Calu3 (cell line): ENCODE measurements at regions of chr10 and their contacts with region 1.

Region 1: GRCh38 chr10:11515596-11516430 is 95.6 kb downstream of the USP6NL start:
- DNase-seq: peak; percentile 41
- H3K4me3 Mint-ChIP-seq: no peak overlapping the region
- H3K27ac Mint-ChIP-seq: no peak overlapping the region
- H3K4me1 Mint-ChIP-seq: peaks cover 9% of the 10 kb centered on the region
- H3K27me3 Mint-ChIP-seq: no peaks in the 10 kb centered on the region
- CTCF ChIP-seq: peak; percentile 65

Region 2: GRCh38 chr10:11209830-11210181 is 306.0 kb before region 1 on chr10:
- CTCF ChIA-PET with region 1: no interaction called
- intact Hi-C with region 1: no loop called
- DNase-seq: no peak
- H3K4me3 Mint-ChIP-seq: no peak overlapping the region
- H3K27ac Mint-ChIP-seq: no peak overlapping the region
- H3K4me1 Mint-ChIP-seq: no peaks in the 10 kb centered on the region
- H3K27me3 Mint-ChIP-seq: peaks cover 17% of the 10 kb centered on the region
- CTCF ChIP-seq: no peak

Region 3: DNA sequence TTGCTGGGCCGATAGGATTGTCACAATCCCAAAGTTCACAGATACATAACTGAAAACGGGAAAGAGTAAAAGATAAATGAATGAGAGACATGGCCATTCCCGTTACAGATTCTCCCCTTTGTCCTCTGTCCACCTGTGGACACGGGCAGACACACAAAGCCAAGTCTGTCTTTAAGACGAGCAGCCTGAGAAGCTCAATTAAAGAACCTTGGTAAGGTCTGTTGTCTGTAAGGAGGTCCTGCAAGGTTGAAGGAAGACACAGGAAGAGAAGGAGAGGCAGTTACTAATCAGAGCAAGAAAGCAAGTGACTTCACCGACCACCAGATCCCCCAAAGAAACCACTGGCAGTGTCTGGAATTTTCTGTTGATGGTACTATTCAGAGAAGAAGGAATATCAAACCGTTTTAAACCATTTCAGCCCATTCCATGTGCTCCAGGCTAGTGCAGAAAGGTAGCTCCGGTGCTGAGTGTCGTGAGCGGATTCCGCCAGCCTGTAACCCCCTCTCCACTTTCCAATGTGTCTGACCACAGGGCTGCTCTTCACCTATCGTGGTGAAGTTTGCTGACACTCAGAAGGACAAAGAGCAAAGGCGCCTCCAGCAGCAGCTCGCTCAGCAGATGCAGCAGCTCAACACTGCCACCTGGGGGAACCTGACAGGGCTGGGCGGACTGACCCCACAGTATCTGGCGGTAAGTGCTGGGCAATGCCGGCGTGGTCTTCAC is 245.5 kb before region 1 on chr10:
- CTCF ChIA-PET with region 1: no interaction called
- intact Hi-C with region 1: no loop called
- DNase-seq: peak; percentile 84
- H3K4me3 Mint-ChIP-seq: no peak overlapping the region
- H3K27ac Mint-ChIP-seq: no peak overlapping the region
- H3K4me1 Mint-ChIP-seq: no peaks in the 10 kb centered on the region
- H3K27me3 Mint-ChIP-seq: peaks cover 64% of the 10 kb centered on the region
- CTCF ChIP-seq: peak; percentile 90

Region 4: DNA sequence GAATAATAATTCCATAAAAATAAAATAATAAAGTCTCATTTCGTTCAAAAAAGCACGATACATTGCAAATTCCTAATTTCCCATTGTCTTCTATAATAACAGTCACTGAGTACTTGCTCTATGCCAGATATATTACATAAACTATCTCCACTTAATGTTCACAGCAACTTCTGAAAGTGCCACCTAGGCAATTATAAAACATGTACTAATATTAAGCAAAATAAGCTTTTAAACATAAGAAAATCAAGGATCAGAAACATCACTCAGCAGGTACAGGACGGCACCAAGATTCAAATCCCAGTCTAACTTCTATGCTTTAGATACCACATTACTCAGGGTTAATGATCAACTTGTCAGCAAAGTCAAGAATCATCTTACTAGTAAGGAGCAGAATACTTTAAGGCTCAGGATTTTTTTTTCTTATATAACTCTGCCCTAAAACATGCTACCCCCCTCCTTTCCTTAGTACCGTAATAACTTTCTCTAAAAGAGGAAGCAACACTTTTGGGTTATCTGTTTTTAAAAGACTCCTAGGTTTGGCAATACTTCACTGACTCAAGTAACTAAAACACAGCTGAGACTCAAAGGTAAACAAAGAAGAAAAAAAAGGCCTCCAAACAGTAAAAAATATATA is 44.4 kb after region 1 on chr10:
- CTCF ChIA-PET with region 1: no interaction called
- intact Hi-C with region 1: no loop called
- DNase-seq: no peak
- H3K4me3 Mint-ChIP-seq: peak overlapping the region; percentile 41
- H3K27ac Mint-ChIP-seq: no peak overlapping the region
- H3K4me1 Mint-ChIP-seq: peaks cover 67% of the 10 kb centered on the region
- H3K27me3 Mint-ChIP-seq: no peaks in the 10 kb centered on the region
- CTCF ChIP-seq: no peak

Region 5: GRCh38 chr10:11602919-11603523 is 87.2 kb after region 1 on chr10:
- CTCF ChIA-PET with region 1: no interaction called
- intact Hi-C with region 1: loop called (anchors 5 kb)
- DNase-seq: no peak
- H3K4me3 Mint-ChIP-seq: no peak overlapping the region
- H3K27ac Mint-ChIP-seq: peak overlapping the region; percentile 43
- H3K4me1 Mint-ChIP-seq: peaks cover 35% of the 10 kb centered on the region
- H3K27me3 Mint-ChIP-seq: no peaks in the 10 kb centered on the region
- CTCF ChIP-seq: no peak

Region 6: GRCh38 chr10:11715815-11716494 is 200.1 kb after region 1 on chr10:
- CTCF ChIA-PET with region 1: no interaction called
- intact Hi-C with region 1: loop called (anchors 2 kb)
- DNase-seq: peak; percentile 43
- H3K4me3 Mint-ChIP-seq: peak overlapping the region; percentile 49
- H3K27ac Mint-ChIP-seq: peak overlapping the region; percentile 12
- H3K4me1 Mint-ChIP-seq: peaks cover 34% of the 10 kb centered on the region
- H3K27me3 Mint-ChIP-seq: no peaks in the 10 kb centered on the region
- CTCF ChIP-seq: no peak

Region 7: DNA sequence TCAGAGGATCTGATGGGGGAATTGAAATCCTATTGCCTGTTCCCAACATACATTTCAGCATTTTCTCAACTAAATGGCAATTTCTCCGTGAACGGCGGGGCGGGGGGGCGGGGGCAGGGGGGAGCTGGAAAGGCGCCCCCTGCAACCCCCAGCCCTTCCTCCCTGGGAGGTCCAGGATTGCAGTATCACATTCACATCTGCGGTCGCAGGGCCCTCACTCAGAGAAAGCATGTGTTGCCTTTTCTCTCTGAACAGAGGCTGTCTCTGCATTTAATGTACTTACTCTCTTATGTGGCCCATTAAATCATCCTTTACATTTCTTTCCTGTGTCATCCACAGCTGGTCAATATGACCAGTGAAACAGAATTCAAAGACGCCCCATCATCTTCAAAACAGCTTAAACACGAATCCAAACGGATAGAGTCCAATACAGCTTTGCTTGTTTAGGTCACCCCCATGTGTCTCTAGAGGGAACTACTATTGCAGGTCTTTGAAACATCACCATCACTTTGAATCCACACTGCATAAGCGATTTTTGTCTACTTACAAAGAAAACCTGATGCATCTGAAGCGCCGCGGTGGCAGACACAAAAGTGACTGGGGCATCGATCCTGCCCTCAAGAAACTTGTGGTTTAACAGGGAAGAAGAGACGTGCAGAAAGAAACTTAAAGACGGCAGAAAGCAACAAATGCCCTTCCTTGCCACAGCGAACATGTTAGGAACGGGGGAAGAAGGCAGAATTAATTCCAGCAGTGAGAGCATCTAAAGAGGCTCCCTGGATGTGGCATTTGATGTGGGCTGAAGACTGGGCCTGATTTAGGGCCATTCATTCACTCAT is 209.3 kb after region 1 on chr10:
- CTCF ChIA-PET with region 1: interaction called, 21 read pairs
- intact Hi-C with region 1: loop called (anchors 1 kb)
- DNase-seq: peak; percentile 42
- H3K4me3 Mint-ChIP-seq: no peak overlapping the region
- H3K27ac Mint-ChIP-seq: peak overlapping the region; percentile 6
- H3K4me1 Mint-ChIP-seq: peaks cover 9% of the 10 kb centered on the region
- H3K27me3 Mint-ChIP-seq: no peaks in the 10 kb centered on the region
- CTCF ChIP-seq: peak; percentile 58

Region 8: GRCh38 chr10:11757821-11758463 is 242.1 kb after region 1 on chr10:
- CTCF ChIA-PET with region 1: interaction called, 6 read pairs
- intact Hi-C with region 1: loop called (anchors 1 kb)
- DNase-seq: peak; percentile 89
- H3K4me3 Mint-ChIP-seq: no peak overlapping the region
- H3K27ac Mint-ChIP-seq: peak overlapping the region; percentile 42
- H3K4me1 Mint-ChIP-seq: no peaks in the 10 kb centered on the region
- H3K27me3 Mint-ChIP-seq: no peaks in the 10 kb centered on the region
- CTCF ChIP-seq: peak; percentile 79